Heart left ventricle (tissue), 16 donors: ENCODE measurements at regions of chr15 and their contacts with region 1.

Region 1: GRCh38 chr15:77419836-77420609 is at the start of gene PEAK1:
- DNase-seq: peak; percentile 100
- ATAC-seq: peak; percentile 97 to 99 (median 99)
- H3K4me3 ChIP-seq: peak within 1 kb of the TSS; percentile 67 to 95 (median 92)
- H3K27ac ChIP-seq: peak within 1 kb of the TSS; percentile 82 to 98 (median 96)
- H3K4me1 ChIP-seq: peaks cover 6 to 73% (median 57%) of the 10 kb centered on the region in 12 donors
- H3K27me3 ChIP-seq: no peaks in the 10 kb centered on the region
- CTCF ChIP-seq: no peak
- POLR2A ChIP-seq: peak; percentile 4 to 93
- total RNA-seq, gene PEAK1: 52.8 to 139 (median 104) TPM

Region 2: DNA sequence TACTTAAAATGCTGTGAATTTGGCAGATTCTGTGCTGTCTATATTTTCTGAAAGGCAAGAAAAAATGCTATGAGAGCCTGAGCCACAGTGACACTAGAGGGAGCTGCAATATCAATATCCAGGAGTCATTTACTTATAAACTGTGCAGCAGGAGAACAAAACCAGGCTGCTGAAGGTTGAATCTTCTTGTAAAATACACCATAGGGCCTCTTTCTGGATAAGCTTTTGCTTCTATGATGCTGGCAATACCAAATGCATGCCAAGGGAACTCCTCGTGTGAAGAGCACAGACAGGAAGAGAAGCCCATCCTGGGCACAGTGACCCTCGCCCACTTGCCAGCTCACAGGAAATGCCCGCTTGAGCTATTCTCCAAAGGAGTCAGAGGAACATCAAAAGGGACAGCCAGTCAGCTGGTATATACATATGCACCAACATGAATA is 301.1 kb before region 1 on chr15:
- intact Hi-C with region 1: loop called in 3 of 10 experiments (anchors 5 to 10 kb)
- DNase-seq: peak in 2 of 5 donors; percentile 37 to 38
- ATAC-seq: peak; percentile 72 to 79 (median 76)
- H3K4me3 ChIP-seq: no peak overlapping the region
- H3K27ac ChIP-seq: peak overlapping the region in 1 of 12 donors; percentile 4
- H3K4me1 ChIP-seq: peaks cover 0 to 34% (median 17%) of the 10 kb centered on the region in 12 donors
- H3K27me3 ChIP-seq: no peaks in the 10 kb centered on the region
- CTCF ChIP-seq: peak; percentile 49 to 88 (median 75)
- POLR2A ChIP-seq: no peak

Region 3: GRCh38 chr15:77201665-77202064 is 218.4 kb before region 1 on chr15:
- intact Hi-C with region 1: loop called in 1 of 10 experiments (anchors 10 kb)
- DNase-seq: no peak
- ATAC-seq: no peak
- H3K4me3 ChIP-seq: no peak overlapping the region
- H3K27ac ChIP-seq: no peak overlapping the region
- H3K4me1 ChIP-seq: no peaks in the 10 kb centered on the region
- H3K27me3 ChIP-seq: no peaks in the 10 kb centered on the region
- CTCF ChIP-seq: no peak
- POLR2A ChIP-seq: no peak

Region 4: GRCh38 chr15:77369168-77369567 is 50.9 kb before region 1 on chr15:
- intact Hi-C with region 1: loop called in 1 of 10 experiments (anchors 10 kb)
- DNase-seq: no peak
- ATAC-seq: no peak
- H3K4me3 ChIP-seq: no peak overlapping the region
- H3K27ac ChIP-seq: no peak overlapping the region
- H3K4me1 ChIP-seq: peaks cover 0 to 24% (median 4%) of the 10 kb centered on the region in 12 donors
- H3K27me3 ChIP-seq: no peaks in the 10 kb centered on the region
- CTCF ChIP-seq: no peak
- POLR2A ChIP-seq: no peak

Region 5: GRCh38 chr15:77482570-77482969 is 62.5 kb after region 1 on chr15:
- intact Hi-C with region 1: loop called in 1 of 10 experiments (anchors 5 kb)
- DNase-seq: no peak
- ATAC-seq: peak in 2 of 4 donors; percentile 41 to 45
- H3K4me3 ChIP-seq: no peak overlapping the region
- H3K27ac ChIP-seq: peak overlapping the region in 11 of 12 donors; percentile 4 to 78 (median 46)
- H3K4me1 ChIP-seq: peaks cover 0 to 65% (median 42%) of the 10 kb centered on the region in 12 donors
- H3K27me3 ChIP-seq: no peaks in the 10 kb centered on the region
- CTCF ChIP-seq: no peak
- POLR2A ChIP-seq: no peak

Region 6: GRCh38 chr15:77543159-77543882 is 123.3 kb after region 1 on chr15:
- intact Hi-C with region 1: loop called in 3 of 10 experiments (anchors 2 to 5 kb)
- DNase-seq: peak; percentile 87 to 94 (median 90)
- ATAC-seq: peak; percentile 77 to 93 (median 90)
- H3K4me3 ChIP-seq: peak overlapping the region in 11 of 12 donors; percentile 7 to 57 (median 44)
- H3K27ac ChIP-seq: peak overlapping the region in 11 of 12 donors; percentile 53 to 86 (median 68)
- H3K4me1 ChIP-seq: peaks cover 4 to 54% (median 48%) of the 10 kb centered on the region in 12 donors
- H3K27me3 ChIP-seq: no peaks in the 10 kb centered on the region
- CTCF ChIP-seq: peak in 11 of 12 donors; percentile 90 to 99 (median 97)
- POLR2A ChIP-seq: peak in 1 of 2 donors; percentile 26